ENCODE measurements at regions of chr21 and their contacts with region 1.

Region 1: GRCh38 chr21:44497703-44498126 is 42.3 kb downstream of the KRTAP10-1 start:
- DNase-seq: no peak
- ATAC-seq: peak in 1 of 2 donors; percentile 45

Region 2: DNA sequence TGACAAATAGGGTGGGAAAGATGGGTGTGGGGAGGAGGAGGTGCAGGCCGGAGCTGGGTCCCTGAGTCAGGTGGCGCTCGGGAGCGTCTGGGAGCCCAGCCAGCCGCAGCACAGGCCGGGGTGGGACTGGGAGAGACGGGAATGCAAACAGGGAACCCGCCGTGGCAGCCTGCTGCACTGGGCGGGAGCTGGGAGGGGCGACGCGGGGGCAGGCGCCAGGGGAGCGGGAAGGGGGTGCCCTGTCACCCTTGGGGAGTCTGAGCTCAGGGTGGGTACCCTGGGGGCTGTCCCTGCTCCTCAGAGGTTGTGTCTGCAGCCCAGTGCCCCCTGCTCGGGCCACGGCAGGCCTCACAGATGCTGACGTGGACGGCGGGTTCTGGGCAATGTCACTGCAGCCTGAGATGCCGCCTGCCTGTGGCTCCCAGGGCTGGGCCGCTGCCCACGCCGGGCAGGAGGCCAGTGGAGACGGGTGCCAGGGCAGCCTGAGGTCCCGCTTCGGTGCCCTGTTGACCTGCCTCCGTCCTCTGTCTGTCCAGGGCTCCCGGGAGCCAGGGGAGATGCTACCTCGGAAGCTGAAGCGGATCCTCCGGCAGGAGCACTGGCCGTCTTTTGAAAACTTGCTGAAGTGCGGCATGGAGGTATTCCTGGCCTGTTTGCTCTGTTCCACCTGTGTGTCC is 59.0 kb before region 1 on chr21:
- intact Hi-C with region 1: loop called in 1 of 2 experiments (anchors 10 kb)
- DNase-seq: peak; percentile 40
- ATAC-seq: peak; percentile 78 to 89